Caco-2 (cell line): ENCODE measurements at regions of chr5 and their contacts with region 1.

Region 1: DNA sequence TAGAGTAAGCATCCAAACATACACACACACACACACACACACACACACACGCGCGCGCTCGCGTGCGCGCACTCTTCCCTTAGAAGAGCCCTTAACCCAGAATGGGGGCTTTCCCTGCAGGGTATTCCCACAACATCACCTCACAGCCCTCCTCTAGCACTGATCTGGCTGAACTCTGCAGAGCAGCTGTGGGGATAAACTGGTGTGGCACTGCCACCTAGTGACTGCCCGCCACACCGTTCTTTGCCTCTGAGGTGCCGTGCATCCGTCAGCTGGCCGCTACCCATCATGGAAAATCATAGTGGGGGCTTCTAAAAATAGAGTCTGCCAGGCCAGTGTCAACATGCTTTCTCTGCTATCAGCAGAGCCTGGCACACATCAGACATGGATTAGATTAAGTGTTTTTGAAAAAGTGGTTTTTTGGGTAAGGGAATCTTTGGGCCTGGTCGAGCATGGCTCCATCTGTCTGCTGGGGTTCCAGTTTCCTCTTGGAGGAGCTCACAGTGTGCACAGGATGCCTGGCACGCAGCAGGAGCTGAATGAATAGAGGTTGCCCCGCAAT is 88.1 kb downstream of the KCNN2 start:
- DNase-seq: peak; percentile 53 to 61
- H3K4me3 ChIP-seq: no peak overlapping the region
- H3K4me3 Mint-ChIP-seq: no peak overlapping the region
- H3K27ac Mint-ChIP-seq: no peak overlapping the region
- H3K4me1 ChIP-seq: no peaks in the 10 kb centered on the region
- H3K4me1 Mint-ChIP-seq: no peaks in the 10 kb centered on the region
- H3K27me3 ChIP-seq: no peaks in the 10 kb centered on the region
- H3K27me3 Mint-ChIP-seq: peaks cover 35% of the 10 kb centered on the region
- CTCF ChIP-seq: peak; percentile 77 to 83

Region 2: DNA sequence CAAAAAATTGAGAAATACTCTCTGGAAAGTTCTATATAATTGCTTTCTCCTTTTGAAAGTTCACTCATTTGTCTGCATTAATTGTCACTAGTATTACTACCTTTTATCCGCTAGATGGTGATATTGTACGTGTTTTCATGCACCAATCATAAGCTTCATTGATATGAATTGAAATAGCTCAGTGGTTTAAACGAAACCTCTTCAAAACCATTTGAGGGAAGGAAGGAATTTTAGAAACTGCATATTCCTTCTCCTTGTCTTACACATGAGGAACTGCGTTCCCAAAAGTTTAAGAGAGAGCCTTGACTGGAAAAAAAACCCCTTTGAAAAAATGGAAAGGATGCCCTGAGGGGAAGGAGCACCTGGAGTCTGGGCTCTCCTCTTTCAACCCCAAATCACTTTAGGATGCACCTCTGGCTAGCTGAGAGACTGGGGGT is 837.9 kb before region 1 on chr5:
- CTCF ChIA-PET with region 1: interaction called, 14 read pairs
- POLR2A ChIA-PET with region 1: no interaction called
- intact Hi-C with region 1: loop called (anchors 1 kb)
- DNase-seq: peak in 1 of 2 experiments; percentile 6
- H3K4me3 ChIP-seq: no peak overlapping the region
- H3K4me3 Mint-ChIP-seq: no peak overlapping the region
- H3K27ac Mint-ChIP-seq: no peak overlapping the region
- H3K4me1 ChIP-seq: no peaks in the 10 kb centered on the region
- H3K4me1 Mint-ChIP-seq: no peaks in the 10 kb centered on the region
- H3K27me3 ChIP-seq: no peaks in the 10 kb centered on the region
- H3K27me3 Mint-ChIP-seq: peaks cover 6% of the 10 kb centered on the region
- CTCF ChIP-seq: peak; percentile 17 to 27

Region 3: GRCh38 chr5:113806250-113806649 is 643.7 kb before region 1 on chr5:
- CTCF ChIA-PET with region 1: no interaction called
- POLR2A ChIA-PET with region 1: no interaction called
- intact Hi-C with region 1: loop called (anchors 10 kb)
- DNase-seq: no peak
- H3K4me3 ChIP-seq: no peak overlapping the region
- H3K4me3 Mint-ChIP-seq: no peak overlapping the region
- H3K27ac Mint-ChIP-seq: no peak overlapping the region
- H3K4me1 ChIP-seq: no peaks in the 10 kb centered on the region
- H3K4me1 Mint-ChIP-seq: no peaks in the 10 kb centered on the region
- H3K27me3 ChIP-seq: no peaks in the 10 kb centered on the region
- H3K27me3 Mint-ChIP-seq: peaks cover 3% of the 10 kb centered on the region
- CTCF ChIP-seq: peak in 1 of 2 experiments; percentile 8

Region 4: DNA sequence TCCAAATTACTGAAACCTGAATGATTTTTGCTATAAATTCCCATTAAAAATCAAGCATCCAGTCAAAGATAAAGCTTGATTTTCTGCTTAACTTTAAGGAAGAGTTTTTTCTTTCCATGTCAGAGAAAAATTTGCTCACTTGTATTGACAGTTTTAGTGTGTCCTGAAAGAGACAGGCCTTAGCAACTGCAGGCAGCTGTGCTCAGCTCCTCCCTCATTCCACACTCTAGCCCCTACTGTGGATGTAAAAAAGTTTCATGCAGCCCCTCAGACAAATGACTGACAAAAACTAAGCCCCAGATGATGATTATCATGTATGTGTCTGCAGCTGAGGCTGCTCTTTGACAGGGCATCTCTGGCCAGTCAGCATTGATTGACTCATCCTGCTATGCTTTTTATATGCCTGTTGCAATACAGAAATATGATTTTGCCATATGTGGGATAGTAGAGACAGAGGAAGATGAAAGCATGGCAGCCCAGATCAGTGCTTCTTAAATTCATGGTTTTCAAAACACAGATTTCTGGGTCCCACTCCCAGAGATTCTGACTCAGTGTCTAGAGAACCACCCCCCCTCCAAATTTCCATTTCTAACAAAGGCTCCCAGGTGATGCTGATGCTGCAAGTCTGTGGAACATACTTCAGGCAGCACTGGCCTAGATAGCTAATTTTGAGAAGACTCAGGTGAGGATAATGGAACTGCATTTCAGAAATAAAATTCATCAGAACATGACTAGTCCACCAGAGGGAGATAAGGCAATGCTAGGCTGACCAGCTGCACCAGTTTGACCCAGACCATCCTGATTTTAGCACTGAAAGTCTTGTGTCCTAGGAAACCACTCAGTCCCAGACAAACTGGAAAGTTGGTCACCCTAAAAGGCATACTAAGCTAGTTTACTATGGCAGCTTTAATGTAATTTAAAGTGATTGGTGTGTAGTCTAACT is 386.7 kb before region 1 on chr5:
- CTCF ChIA-PET with region 1: no interaction called
- POLR2A ChIA-PET with region 1: no interaction called
- intact Hi-C with region 1: loop called (anchors 1 kb)
- DNase-seq: no peak
- H3K4me3 ChIP-seq: no peak overlapping the region
- H3K4me3 Mint-ChIP-seq: no peak overlapping the region
- H3K27ac Mint-ChIP-seq: no peak overlapping the region
- H3K4me1 ChIP-seq: no peaks in the 10 kb centered on the region
- H3K4me1 Mint-ChIP-seq: no peaks in the 10 kb centered on the region
- H3K27me3 ChIP-seq: no peaks in the 10 kb centered on the region
- H3K27me3 Mint-ChIP-seq: no peaks in the 10 kb centered on the region
- CTCF ChIP-seq: no peak

Region 5: DNA sequence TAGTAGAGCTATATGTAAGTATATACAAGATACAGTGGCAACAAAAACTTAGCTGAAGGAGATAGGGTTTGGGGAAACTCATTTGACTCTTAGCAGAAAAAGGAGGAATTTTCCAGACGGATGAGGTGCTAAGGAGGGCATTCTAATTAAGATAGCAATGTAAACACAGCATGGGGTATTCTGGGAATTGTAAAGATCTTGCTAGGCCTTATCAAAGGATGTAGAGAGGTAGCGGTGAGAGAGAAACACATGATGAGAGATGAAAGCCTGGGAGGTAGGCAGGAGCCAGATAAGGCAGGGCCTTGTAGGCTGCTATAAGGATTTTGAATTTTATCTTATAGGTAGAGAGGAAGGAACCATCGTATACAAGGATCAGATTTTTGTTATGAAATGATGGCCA is 194.7 kb before region 1 on chr5:
- CTCF ChIA-PET with region 1: no interaction called
- POLR2A ChIA-PET with region 1: no interaction called
- intact Hi-C with region 1: no loop called
- DNase-seq: no peak
- H3K4me3 ChIP-seq: no peak overlapping the region
- H3K4me3 Mint-ChIP-seq: no peak overlapping the region
- H3K27ac Mint-ChIP-seq: no peak overlapping the region
- H3K4me1 ChIP-seq: peaks cover 14% of the 10 kb centered on the region
- H3K4me1 Mint-ChIP-seq: no peaks in the 10 kb centered on the region
- H3K27me3 ChIP-seq: no peaks in the 10 kb centered on the region
- H3K27me3 Mint-ChIP-seq: peaks cover 3% of the 10 kb centered on the region
- CTCF ChIP-seq: no peak

Region 6: GRCh38 chr5:114361724-114362196 is 88.2 kb before region 1 on chr5 and contains the start of gene KCNN2:
- CTCF ChIA-PET with region 1: no interaction called
- POLR2A ChIA-PET with region 1: no interaction called
- intact Hi-C with region 1: loop called (anchors 2 kb)
- DNase-seq: peak; percentile 56 to 72
- H3K4me3 ChIP-seq: peak within 1 kb of the TSS; percentile 35
- H3K4me3 Mint-ChIP-seq: peak within 1 kb of the TSS; percentile 84
- H3K27ac Mint-ChIP-seq: no peak within 1 kb of the TSS
- H3K4me1 ChIP-seq: no peaks in the 10 kb centered on the region
- H3K4me1 Mint-ChIP-seq: peaks cover 5% of the 10 kb centered on the region
- H3K27me3 ChIP-seq: no peaks in the 10 kb centered on the region
- H3K27me3 Mint-ChIP-seq: peaks cover 26% of the 10 kb centered on the region
- CTCF ChIP-seq: no peak
- total RNA-seq, gene KCNN2: 0.27 TPM in 1 of 2 replicates, not detected in the other

Region 7: GRCh38 chr5:115069087-115069968 is 619.4 kb after region 1 on chr5:
- CTCF ChIA-PET with region 1: interaction called, 3 read pairs
- POLR2A ChIA-PET with region 1: no interaction called
- intact Hi-C with region 1: loop called (anchors 1 kb)
- DNase-seq: peak; percentile 47 to 49
- H3K4me3 ChIP-seq: no peak overlapping the region
- H3K4me3 Mint-ChIP-seq: peak overlapping the region; percentile 63
- H3K27ac Mint-ChIP-seq: no peak overlapping the region
- H3K4me1 ChIP-seq: no peaks in the 10 kb centered on the region
- H3K4me1 Mint-ChIP-seq: no peaks in the 10 kb centered on the region
- H3K27me3 ChIP-seq: no peaks in the 10 kb centered on the region
- H3K27me3 Mint-ChIP-seq: peaks cover 4% of the 10 kb centered on the region
- CTCF ChIP-seq: peak; percentile 66 to 81